Activated CD8-positive, alpha-beta T cell treated with anti-CD3 and anti-CD28 coated beads for 36 hours (primary cell): ENCODE measurements at regions of chr15 and their contacts with region 1.

Region 1: DNA sequence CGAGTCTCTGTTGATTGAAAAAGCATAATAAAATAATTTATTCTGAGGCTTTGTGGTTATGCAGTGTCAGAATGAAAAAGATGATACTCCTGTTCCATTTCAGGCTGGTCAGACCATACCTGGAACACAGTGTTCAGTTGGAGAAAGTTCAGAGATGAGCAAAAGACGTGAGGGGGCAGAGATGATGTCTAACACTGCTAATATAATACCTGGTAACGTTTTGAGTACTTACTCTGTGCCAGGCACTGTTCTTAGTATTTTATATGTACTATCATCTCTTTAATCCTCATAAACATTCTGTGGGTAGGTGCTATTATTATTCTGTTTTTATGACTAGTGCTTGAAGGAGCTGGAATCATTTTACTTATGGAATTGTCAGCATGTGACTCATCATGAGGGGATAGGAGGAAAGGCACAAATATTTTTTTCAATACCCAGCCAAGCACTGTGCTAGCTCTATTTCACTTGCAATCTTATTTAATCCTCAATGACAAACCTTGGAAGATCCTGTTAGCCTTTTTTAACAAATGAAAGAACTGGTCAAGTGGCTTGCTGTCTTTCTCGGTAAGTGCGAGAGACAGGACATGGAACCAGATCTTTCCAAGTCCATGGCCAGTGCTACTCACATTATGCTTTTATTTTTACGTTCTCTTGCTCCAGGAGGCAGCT is 31.8 kb downstream of the IQGAP1 start:
- DNase-seq: peak; percentile 75
- ATAC-seq: peak; percentile 96
- H3K4me3 Mint-ChIP-seq: peak overlapping the region; percentile 50
- H3K27ac Mint-ChIP-seq: peak overlapping the region; percentile 95
- H3K4me1 Mint-ChIP-seq: peaks cover 74% of the 10 kb centered on the region
- H3K27me3 Mint-ChIP-seq: no peaks in the 10 kb centered on the region
- CTCF ChIP-seq: no peak

Region 2: GRCh38 chr15:90400406-90401314 is 19.2 kb before region 1 on chr15:
- CTCF ChIA-PET with region 1: interaction called, 4 read pairs
- POLR2A ChIA-PET with region 1: interaction called, 15 read pairs
- intact Hi-C with region 1: no loop called
- DNase-seq: peak; percentile 73
- ATAC-seq: peak; percentile 98
- H3K4me3 Mint-ChIP-seq: peak overlapping the region; percentile 44
- H3K27ac Mint-ChIP-seq: peak overlapping the region; percentile 95
- H3K4me1 Mint-ChIP-seq: peaks cover 60% of the 10 kb centered on the region
- H3K27me3 Mint-ChIP-seq: no peaks in the 10 kb centered on the region
- CTCF ChIP-seq: no peak

Region 3: DNA sequence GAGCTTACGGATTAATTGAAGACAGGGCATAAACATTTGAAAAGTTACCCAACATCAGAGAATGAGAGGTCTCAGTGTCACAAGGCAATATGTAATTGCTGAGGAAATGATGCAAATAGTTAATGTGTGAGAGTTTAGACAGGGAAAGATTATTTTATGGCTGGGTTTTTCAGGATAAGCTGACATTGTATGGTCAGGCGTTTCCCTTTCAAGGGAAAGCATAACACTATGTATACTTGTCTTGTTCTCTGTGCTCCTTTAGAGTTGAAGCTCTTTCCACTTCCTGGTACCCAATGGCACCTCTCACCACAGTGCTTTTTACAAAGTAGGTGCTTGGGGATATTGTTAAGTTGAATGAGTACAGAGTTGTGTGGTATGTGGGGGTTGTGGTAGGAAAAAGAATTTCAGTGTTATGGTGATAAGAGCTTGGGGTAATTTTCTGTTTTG is 12.0 kb before region 1 on chr15:
- CTCF ChIA-PET with region 1: interaction called, 7 read pairs
- POLR2A ChIA-PET with region 1: interaction called, 17 read pairs
- intact Hi-C with region 1: no loop called
- DNase-seq: peak; percentile 62
- ATAC-seq: peak; percentile 93
- H3K4me3 Mint-ChIP-seq: peak overlapping the region; percentile 50
- H3K27ac Mint-ChIP-seq: peak overlapping the region; percentile 89
- H3K4me1 Mint-ChIP-seq: peaks cover 76% of the 10 kb centered on the region
- H3K27me3 Mint-ChIP-seq: no peaks in the 10 kb centered on the region
- CTCF ChIP-seq: no peak

Region 4: GRCh38 chr15:90439946-90440345 is 20.1 kb after region 1 on chr15:
- CTCF ChIA-PET with region 1: no interaction called
- POLR2A ChIA-PET with region 1: no interaction called
- intact Hi-C with region 1: no loop called
- DNase-seq: no peak
- ATAC-seq: no peak
- H3K4me3 Mint-ChIP-seq: no peak overlapping the region
- H3K27ac Mint-ChIP-seq: no peak overlapping the region
- H3K4me1 Mint-ChIP-seq: peaks cover 9% of the 10 kb centered on the region
- H3K27me3 Mint-ChIP-seq: no peaks in the 10 kb centered on the region
- CTCF ChIP-seq: no peak